Naive thymus-derived CD8-positive, alpha-beta T cell (primary cell): ENCODE measurements at regions of chr16 and their contacts with region 1.

Region 1: GRCh38 chr16:22297114-22297878 is at the start of gene POLR3E:
- DNase-seq: peak; percentile 99 to 100 (median 100)
- ATAC-seq: peak; percentile 71 to 85
- H3K4me3 Mint-ChIP-seq: peak within 1 kb of the TSS; percentile 86 to 99 (median 96)
- H3K27ac Mint-ChIP-seq: peak within 1 kb of the TSS; percentile 94 to 100 (median 100)
- H3K4me1 Mint-ChIP-seq: peaks cover 33 to 57% (median 45%) of the 10 kb centered on the region in 4 donors
- H3K27me3 Mint-ChIP-seq: peaks cover 0 to 4% (median 0%) of the 10 kb centered on the region in 5 donors
- polyA plus RNA-seq, gene POLR3E: 11.1 to 13.9 (median 11.5) TPM

Region 2: DNA sequence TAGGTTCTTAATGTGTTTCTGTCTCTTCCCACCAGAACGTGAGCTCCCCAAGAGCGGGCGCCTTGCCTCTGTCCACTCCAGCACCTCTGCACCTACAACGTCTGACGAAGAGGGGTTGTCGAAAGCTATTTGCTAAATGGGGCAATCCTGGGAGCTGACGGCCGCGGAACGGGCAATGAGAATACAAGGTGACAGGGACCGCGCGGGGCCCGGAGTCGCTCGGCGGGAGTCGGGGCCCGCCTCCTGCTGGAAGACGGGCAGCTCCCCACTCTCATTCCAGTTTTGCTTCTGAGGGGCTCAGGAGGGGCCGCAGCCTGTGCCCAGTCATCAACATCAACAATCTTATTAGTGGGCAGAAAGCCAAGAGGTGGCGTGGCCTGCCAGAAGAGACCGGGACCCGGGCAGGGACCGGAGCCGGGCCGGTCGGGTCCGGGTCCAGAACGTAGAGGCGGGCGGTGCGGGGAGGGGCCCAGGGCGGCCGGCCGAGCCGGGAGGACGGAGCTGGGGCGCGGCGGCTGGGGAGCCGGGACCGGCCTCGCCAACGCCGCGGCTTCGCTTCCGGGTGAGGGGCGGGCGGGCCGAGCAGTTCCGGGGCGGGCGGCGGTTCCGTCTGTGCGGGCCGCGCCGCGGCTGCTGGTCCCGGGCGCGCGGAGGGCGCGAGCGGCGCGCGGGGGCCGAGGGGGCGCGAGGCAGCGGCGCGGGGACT is 289.6 kb before region 1 on chr16 and contains the start of gene MOSMO:
- POLR2A ChIA-PET with region 1: interaction called, 10 read pairs
- DNase-seq: peak; percentile 37 to 75 (median 64)
- ATAC-seq: peak; percentile 88 to 92
- H3K4me3 Mint-ChIP-seq: peak within 1 kb of the TSS; percentile 83 to 98 (median 90)
- H3K27ac Mint-ChIP-seq: peak within 1 kb of the TSS; percentile 80 to 96 (median 90)
- H3K4me1 Mint-ChIP-seq: peaks cover 30 to 52% (median 41%) of the 10 kb centered on the region in 4 donors
- H3K27me3 Mint-ChIP-seq: no peaks in the 10 kb centered on the region
- polyA plus RNA-seq, gene MOSMO: 4.7 to 6.5 (median 4.9) TPM

Region 3: GRCh38 chr16:22098405-22099255 is 198.7 kb before region 1 on chr16:
- POLR2A ChIA-PET with region 1: no interaction called
- DNase-seq: peak in 5 of 10 donors; percentile 2 to 54 (median 19)
- ATAC-seq: peak; percentile 78 to 80
- H3K4me3 Mint-ChIP-seq: peak overlapping the region in 2 of 10 donors; percentile 33 to 45
- H3K27ac Mint-ChIP-seq: peak overlapping the region in 1 of 10 donors; percentile 40
- H3K4me1 Mint-ChIP-seq: peaks cover 3 to 6% (median 5%) of the 10 kb centered on the region in 4 donors
- H3K27me3 Mint-ChIP-seq: peaks cover 5 to 29% (median 19%) of the 10 kb centered on the region in 5 donors

Region 4: GRCh38 chr16:22206013-22206841 is 91.1 kb before region 1 on chr16 and contains the start of gene EEF2K:
- POLR2A ChIA-PET with region 1: interaction called, 29 read pairs
- DNase-seq: peak; percentile 58 to 86 (median 70)
- ATAC-seq: peak; percentile 86 to 91
- H3K4me3 Mint-ChIP-seq: peak within 1 kb of the TSS; percentile 90 to 99 (median 94)
- H3K27ac Mint-ChIP-seq: peak within 1 kb of the TSS; percentile 65 to 95 (median 90)
- H3K4me1 Mint-ChIP-seq: peaks cover 7 to 50% (median 37%) of the 10 kb centered on the region in 4 donors
- H3K27me3 Mint-ChIP-seq: no peaks in the 10 kb centered on the region
- polyA plus RNA-seq, gene EEF2K: 2.0 to 3.2 (median 3.1) TPM

Region 5: DNA sequence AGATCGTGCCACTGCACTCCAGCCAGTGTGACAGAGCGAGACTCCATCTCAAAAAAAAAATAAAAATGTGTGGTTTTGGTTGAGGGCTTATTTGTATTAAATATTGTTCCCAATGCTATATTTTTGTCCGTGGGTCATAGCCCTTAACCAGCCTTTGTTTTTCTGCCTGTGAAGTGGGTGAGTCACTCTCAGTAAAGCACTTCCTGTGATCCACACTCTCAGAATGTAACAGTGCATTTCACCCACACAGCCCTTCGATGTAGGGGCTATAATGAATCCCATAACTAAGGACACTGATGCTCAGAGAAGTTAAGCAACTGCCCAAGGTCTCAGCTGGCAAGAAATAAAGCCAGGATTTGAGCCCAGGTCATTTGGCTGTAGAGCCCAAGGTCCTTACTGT is 34.8 kb before region 1 on chr16:
- POLR2A ChIA-PET with region 1: no interaction called
- DNase-seq: no peak
- ATAC-seq: no peak
- H3K4me3 Mint-ChIP-seq: no peak overlapping the region
- H3K27ac Mint-ChIP-seq: peak overlapping the region in 4 of 10 donors; percentile 9 to 44 (median 34)
- H3K4me1 Mint-ChIP-seq: peaks cover 9 to 23% (median 18%) of the 10 kb centered on the region in 4 donors
- H3K27me3 Mint-ChIP-seq: no peaks in the 10 kb centered on the region

Region 6: GRCh38 chr16:22272870-22273595 is 24.3 kb before region 1 on chr16:
- POLR2A ChIA-PET with region 1: no interaction called
- DNase-seq: no peak
- ATAC-seq: no peak
- H3K4me3 Mint-ChIP-seq: no peak overlapping the region
- H3K27ac Mint-ChIP-seq: no peak overlapping the region
- H3K4me1 Mint-ChIP-seq: no peaks in the 10 kb centered on the region
- H3K27me3 Mint-ChIP-seq: no peaks in the 10 kb centered on the region